ENCODE measurements at regions of chr4 and their contacts with region 1.

Region 1: GRCh38 chr4:121696581-121697461 is at the start of gene ANXA5:
- DNase-seq: peak; percentile 78
- H3K4me3 Mint-ChIP-seq: peak within 1 kb of the TSS; percentile 99
- H3K27ac Mint-ChIP-seq: peak within 1 kb of the TSS; percentile 100
- H3K4me1 Mint-ChIP-seq: peaks cover 62% of the 10 kb centered on the region
- H3K27me3 Mint-ChIP-seq: peaks cover 40% of the 10 kb centered on the region
- total RNA-seq, gene ANXA5: 128 and 131 TPM in 2 replicates

Region 2: GRCh38 chr4:121564840-121565375 is 131.9 kb before region 1 on chr4:
- intact Hi-C with region 1: no loop called
- DNase-seq: no peak
- H3K4me3 Mint-ChIP-seq: no peak overlapping the region
- H3K27ac Mint-ChIP-seq: no peak overlapping the region
- H3K4me1 Mint-ChIP-seq: no peaks in the 10 kb centered on the region
- H3K27me3 Mint-ChIP-seq: peaks cover 6% of the 10 kb centered on the region

Region 3: DNA sequence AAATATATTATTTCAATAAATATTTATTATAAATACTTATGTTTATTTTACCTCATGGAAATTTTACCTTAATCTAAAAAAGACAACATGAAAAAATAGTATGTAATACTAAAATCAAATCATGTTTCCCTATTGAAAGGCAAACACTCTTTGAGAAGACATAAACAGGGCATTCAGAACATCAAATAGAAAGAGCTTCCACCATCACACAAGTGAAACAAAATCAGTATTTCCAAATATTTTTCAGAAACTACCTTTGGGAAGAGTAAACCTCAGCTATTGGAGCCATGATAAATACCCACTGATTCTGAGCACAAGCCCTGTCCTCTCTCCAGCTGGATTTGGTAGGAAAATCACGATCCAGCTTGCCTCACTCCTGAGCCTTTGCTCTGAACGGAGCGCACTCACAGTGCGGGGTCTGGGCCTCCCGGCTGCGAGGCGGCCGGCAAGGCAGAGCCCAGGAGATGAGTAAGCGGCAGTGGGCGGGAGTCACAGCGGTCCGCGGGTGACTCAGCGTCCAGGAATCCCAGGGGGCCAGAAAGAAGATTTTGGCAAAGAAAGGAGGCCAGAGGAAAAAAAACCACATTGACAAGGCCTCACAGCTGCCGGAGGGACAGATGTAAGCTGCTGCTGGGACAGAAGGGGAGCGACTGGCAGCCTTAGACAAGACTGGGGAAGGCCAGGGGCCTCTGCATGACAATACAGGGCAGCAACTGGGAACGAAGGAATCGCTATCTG is 14.6 kb after region 1 on chr4:
- intact Hi-C with region 1: loop called (anchors 1 kb)
- DNase-seq: peak; percentile 10
- H3K4me3 Mint-ChIP-seq: peak overlapping the region; percentile 45
- H3K27ac Mint-ChIP-seq: no peak overlapping the region
- H3K4me1 Mint-ChIP-seq: peaks cover 51% of the 10 kb centered on the region
- H3K27me3 Mint-ChIP-seq: peaks cover 24% of the 10 kb centered on the region

Region 4: GRCh38 chr4:121726642-121727268 is 29.9 kb after region 1 on chr4:
- intact Hi-C with region 1: loop called (anchors 1 kb)
- DNase-seq: no peak
- H3K4me3 Mint-ChIP-seq: no peak overlapping the region
- H3K27ac Mint-ChIP-seq: no peak overlapping the region
- H3K4me1 Mint-ChIP-seq: peaks cover 6% of the 10 kb centered on the region
- H3K27me3 Mint-ChIP-seq: peaks cover 10% of the 10 kb centered on the region

Region 5: GRCh38 chr4:121736735-121737351 is 40.0 kb after region 1 on chr4:
- intact Hi-C with region 1: no loop called
- DNase-seq: no peak
- H3K4me3 Mint-ChIP-seq: no peak overlapping the region
- H3K27ac Mint-ChIP-seq: no peak overlapping the region
- H3K4me1 Mint-ChIP-seq: no peaks in the 10 kb centered on the region
- H3K27me3 Mint-ChIP-seq: peaks cover 21% of the 10 kb centered on the region

Region 6: DNA sequence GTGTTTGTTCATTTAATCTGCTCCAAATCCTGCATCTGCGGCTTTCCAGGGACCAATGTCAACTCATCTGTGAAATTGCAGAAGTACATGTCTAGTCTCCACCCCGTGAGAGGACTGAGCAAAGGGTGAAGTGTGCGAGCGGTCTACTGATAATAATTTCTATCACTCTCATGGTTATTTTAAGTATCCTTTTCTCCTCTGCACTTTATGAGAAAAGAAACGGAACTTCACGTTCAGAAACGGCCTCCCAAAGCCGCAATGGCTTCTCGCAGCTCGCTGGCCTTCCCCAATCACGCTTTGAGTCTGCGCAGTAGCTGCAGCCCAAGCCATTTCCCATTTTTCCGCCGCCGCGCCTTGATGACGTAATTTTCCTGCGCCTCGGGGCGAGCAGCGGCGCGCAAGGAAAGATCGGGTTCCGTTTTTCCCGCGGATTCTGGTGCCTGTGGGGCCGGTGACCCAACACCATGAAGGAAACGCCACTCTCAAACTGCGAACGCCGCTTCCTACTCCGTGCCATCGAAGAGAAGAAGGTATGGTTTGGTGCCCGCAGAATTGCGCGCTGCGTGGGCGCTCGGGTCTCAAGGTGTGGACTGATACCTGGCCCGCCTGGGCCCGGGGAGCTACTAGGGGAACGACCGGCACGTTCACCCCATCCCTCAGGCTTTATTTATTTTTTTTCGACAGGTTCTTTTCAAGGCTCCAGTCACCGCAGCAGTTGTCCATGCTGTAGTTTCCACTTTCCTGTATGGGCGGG is 104.3 kb after region 1 on chr4 and contains the start of gene EXOSC9:
- intact Hi-C with region 1: loop called (anchors 1 kb)
- DNase-seq: peak; percentile 92
- H3K4me3 Mint-ChIP-seq: peak within 1 kb of the TSS; percentile 90
- H3K27ac Mint-ChIP-seq: peak within 1 kb of the TSS; percentile 97
- H3K4me1 Mint-ChIP-seq: peaks cover 51% of the 10 kb centered on the region
- H3K27me3 Mint-ChIP-seq: no peaks in the 10 kb centered on the region
- total RNA-seq, gene EXOSC9: 71.9 and 74.0 TPM in 2 replicates

Region 7: GRCh38 chr4:121823505-121824170 is 126.8 kb after region 1 on chr4 and contains the start of gene CCNA2:
- intact Hi-C with region 1: loop called (anchors 1 kb)
- DNase-seq: peak; percentile 95
- H3K4me3 Mint-ChIP-seq: peak within 1 kb of the TSS; percentile 94
- H3K27ac Mint-ChIP-seq: peak within 1 kb of the TSS; percentile 91
- H3K4me1 Mint-ChIP-seq: peaks cover 45% of the 10 kb centered on the region
- H3K27me3 Mint-ChIP-seq: no peaks in the 10 kb centered on the region
- total RNA-seq, gene CCNA2: 59.9 and 64.3 TPM in 2 replicates

Region 8: GRCh38 chr4:121869841-121870656 is 173.2 kb after region 1 on chr4 and contains the start of gene BBS7:
- intact Hi-C with region 1: loop called (anchors 5 kb)
- DNase-seq: peak; percentile 94
- H3K4me3 Mint-ChIP-seq: peak within 1 kb of the TSS; percentile 99
- H3K27ac Mint-ChIP-seq: peak within 1 kb of the TSS; percentile 91
- H3K4me1 Mint-ChIP-seq: peaks cover 23% of the 10 kb centered on the region
- H3K27me3 Mint-ChIP-seq: peaks cover 22% of the 10 kb centered on the region
- total RNA-seq, gene BBS7: 16.9 and 20.2 TPM in 2 replicates

Measured in activated T-helper 1 cell treated with anti-CD3 and anti-CD28 coated beads, Interleukin-12 subunit alpha, Interleukin-12 subunit beta, Interleukin-2, Interleukin-4 antibody, amounts not matched to agents 30 ng/mL and 10 ng/mL and 1 ng/mL, durations not matched to agents 14 hours and 24 hours and 36 hours (primary cell).